CD8-positive, alpha-beta T cell (primary cell): ENCODE measurements at regions of chr10 and their contacts with region 1.

Region 1: GRCh38 chr10:72048450-72049124 is 39.8 kb downstream of the SPOCK2 start:
- DNase-seq: peak; percentile 80 to 95 (median 90)
- ATAC-seq: peak; percentile 98
- H3K4me3 ChIP-seq: no peak overlapping the region
- H3K4me3 Mint-ChIP-seq: no peak overlapping the region
- H3K27ac ChIP-seq: no peak overlapping the region
- H3K27ac Mint-ChIP-seq: no peak overlapping the region
- H3K4me1 ChIP-seq: no peaks in the 10 kb centered on the region
- H3K4me1 Mint-ChIP-seq: peaks cover 7% of the 10 kb centered on the region
- H3K27me3 ChIP-seq: no peaks in the 10 kb centered on the region
- H3K27me3 Mint-ChIP-seq: no peaks in the 10 kb centered on the region
- CTCF ChIP-seq: peak; percentile 99

Region 2: GRCh38 chr10:72038458-72039001 is 10.1 kb before region 1 on chr10:
- CTCF ChIA-PET with region 1: interaction called, 38 read pairs
- POLR2A ChIA-PET with region 1: no interaction called
- intact Hi-C with region 1: no loop called
- DNase-seq: no peak
- ATAC-seq: no peak
- H3K4me3 ChIP-seq: no peak overlapping the region
- H3K4me3 Mint-ChIP-seq: no peak overlapping the region
- H3K27ac ChIP-seq: no peak overlapping the region
- H3K27ac Mint-ChIP-seq: no peak overlapping the region
- H3K4me1 ChIP-seq: no peaks in the 10 kb centered on the region
- H3K4me1 Mint-ChIP-seq: no peaks in the 10 kb centered on the region
- H3K27me3 ChIP-seq: no peaks in the 10 kb centered on the region
- H3K27me3 Mint-ChIP-seq: no peaks in the 10 kb centered on the region
- CTCF ChIP-seq: no peak

Region 3: GRCh38 chr10:72069751-72070526 is 21.4 kb after region 1 on chr10:
- CTCF ChIA-PET with region 1: interaction called, 31 read pairs
- POLR2A ChIA-PET with region 1: interaction called, 3 read pairs
- intact Hi-C with region 1: no loop called
- DNase-seq: peak in 1 of 9 experiments; percentile 36
- ATAC-seq: no peak
- H3K4me3 ChIP-seq: no peak overlapping the region
- H3K4me3 Mint-ChIP-seq: no peak overlapping the region
- H3K27ac ChIP-seq: peak overlapping the region in 1 of 2 experiments; percentile 50
- H3K27ac Mint-ChIP-seq: peak overlapping the region; percentile 72
- H3K4me1 ChIP-seq: peaks cover 52% of the 10 kb centered on the region
- H3K4me1 Mint-ChIP-seq: peaks cover 56% of the 10 kb centered on the region
- H3K27me3 ChIP-seq: no peaks in the 10 kb centered on the region
- H3K27me3 Mint-ChIP-seq: no peaks in the 10 kb centered on the region
- CTCF ChIP-seq: peak; percentile 19

Region 4: GRCh38 chr10:72088889-72089575 is 40.4 kb after region 1 on chr10:
- CTCF ChIA-PET with region 1: interaction called, 14 read pairs
- POLR2A ChIA-PET with region 1: interaction called, 3 read pairs
- intact Hi-C with region 1: loop called in 1 of 2 experiments (anchors 2 kb)
- DNase-seq: peak in 8 of 9 experiments; percentile 37 to 84 (median 71)
- ATAC-seq: peak; percentile 56
- H3K4me3 ChIP-seq: peak overlapping the region; percentile 96 to 98
- H3K4me3 Mint-ChIP-seq: peak overlapping the region; percentile 100
- H3K27ac ChIP-seq: peak overlapping the region; percentile 96 to 98
- H3K27ac Mint-ChIP-seq: peak overlapping the region; percentile 99
- H3K4me1 ChIP-seq: peaks cover 45% of the 10 kb centered on the region
- H3K4me1 Mint-ChIP-seq: peaks cover 49% of the 10 kb centered on the region
- H3K27me3 ChIP-seq: no peaks in the 10 kb centered on the region
- H3K27me3 Mint-ChIP-seq: no peaks in the 10 kb centered on the region
- CTCF ChIP-seq: no peak

Region 5: DNA sequence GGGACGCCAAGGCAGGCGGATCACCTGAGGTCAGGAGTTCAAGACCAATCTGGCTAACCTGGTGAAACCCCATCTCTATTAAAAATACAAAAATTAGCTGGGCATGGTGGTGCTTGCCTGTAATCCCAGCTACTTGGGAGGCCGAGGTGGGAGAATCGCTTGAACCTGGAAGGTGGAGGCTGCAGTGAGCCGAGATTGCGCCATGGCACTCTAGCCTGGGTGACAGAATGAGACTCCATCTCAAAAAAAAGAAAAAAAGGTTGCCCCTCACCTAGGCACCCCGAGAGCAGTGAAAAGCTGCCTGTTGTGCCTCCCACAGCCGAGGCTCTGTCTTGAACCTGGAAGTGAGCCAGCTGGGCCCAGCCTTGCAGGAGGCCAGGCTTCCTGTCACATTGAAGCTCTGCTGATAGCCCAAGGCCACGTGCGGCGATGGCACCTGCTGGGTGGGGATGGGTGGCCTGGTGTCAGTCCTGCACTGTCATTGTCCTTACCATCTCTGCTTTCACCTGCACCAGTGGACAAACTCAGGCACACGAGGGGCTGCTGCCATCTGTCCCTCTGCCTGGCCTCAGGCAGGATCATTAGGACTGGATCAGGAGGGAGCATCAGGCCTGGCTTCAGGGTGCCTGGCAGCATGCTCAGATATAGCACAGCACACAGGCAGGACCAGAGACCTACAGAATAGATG is 268.3 kb after region 1 on chr10:
- CTCF ChIA-PET with region 1: no interaction called
- POLR2A ChIA-PET with region 1: no interaction called
- intact Hi-C with region 1: no loop called
- DNase-seq: peak in 8 of 9 experiments; percentile 53 to 83 (median 65)
- ATAC-seq: no peak
- H3K4me3 ChIP-seq: no peak overlapping the region
- H3K4me3 Mint-ChIP-seq: peak overlapping the region; percentile 35
- H3K27ac ChIP-seq: peak overlapping the region in 1 of 2 experiments; percentile 2
- H3K27ac Mint-ChIP-seq: peak overlapping the region; percentile 90
- H3K4me1 ChIP-seq: peaks cover 78% of the 10 kb centered on the region
- H3K4me1 Mint-ChIP-seq: peaks cover 69% of the 10 kb centered on the region
- H3K27me3 ChIP-seq: no peaks in the 10 kb centered on the region
- H3K27me3 Mint-ChIP-seq: no peaks in the 10 kb centered on the region
- CTCF ChIP-seq: no peak

Region 6: DNA sequence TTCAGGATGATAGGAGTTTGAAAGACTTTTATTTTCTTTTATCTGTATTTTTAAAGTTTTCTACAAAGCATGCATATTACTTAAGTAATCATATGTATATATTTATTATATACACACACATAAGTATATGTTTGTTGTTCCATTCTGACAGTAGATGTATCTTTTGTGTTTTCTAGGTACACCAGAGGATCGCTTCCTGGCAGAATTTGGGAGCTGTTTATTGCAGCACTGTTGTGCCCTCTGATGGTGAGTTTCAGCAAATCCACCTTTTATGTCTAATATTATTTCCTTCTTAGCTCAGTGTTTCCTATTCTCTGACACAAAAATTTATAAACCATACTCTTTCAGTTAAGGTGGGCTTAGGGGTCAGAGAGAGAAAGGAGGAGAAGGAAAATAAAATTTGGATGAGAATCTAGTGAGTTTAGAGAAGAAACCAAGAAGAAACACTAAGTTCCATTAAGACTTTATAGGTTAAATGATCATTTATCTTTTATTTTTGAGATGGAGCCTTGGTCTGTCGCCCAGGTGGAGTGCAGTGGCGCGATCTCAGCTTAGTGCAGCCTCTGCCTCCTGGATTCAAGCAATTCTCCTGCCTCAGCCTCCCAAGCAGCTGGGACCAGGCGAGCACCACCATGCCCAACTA is 785.7 kb after region 1 on chr10:
- CTCF ChIA-PET with region 1: no interaction called
- POLR2A ChIA-PET with region 1: no interaction called
- intact Hi-C with region 1: loop called in 1 of 2 experiments (anchors 5 kb)
- DNase-seq: peak in 7 of 9 experiments; percentile 9 to 75 (median 34)
- ATAC-seq: peak; percentile 71
- H3K4me3 ChIP-seq: no peak overlapping the region
- H3K4me3 Mint-ChIP-seq: no peak overlapping the region
- H3K27ac ChIP-seq: no peak overlapping the region
- H3K27ac Mint-ChIP-seq: no peak overlapping the region
- H3K4me1 ChIP-seq: no peaks in the 10 kb centered on the region
- H3K4me1 Mint-ChIP-seq: peaks cover 2% of the 10 kb centered on the region
- H3K27me3 ChIP-seq: no peaks in the 10 kb centered on the region
- H3K27me3 Mint-ChIP-seq: no peaks in the 10 kb centered on the region
- CTCF ChIP-seq: peak; percentile 64

Region 7: GRCh38 chr10:73625004-73625883 is 1576.7 kb after region 1 on chr10:
- CTCF ChIA-PET with region 1: no interaction called
- POLR2A ChIA-PET with region 1: no interaction called
- intact Hi-C with region 1: no loop called
- DNase-seq: peak in 3 of 9 experiments; percentile 5 to 55 (median 34)
- ATAC-seq: peak; percentile 65
- H3K4me3 ChIP-seq: peak overlapping the region; percentile 78 to 90
- H3K4me3 Mint-ChIP-seq: peak overlapping the region; percentile 95
- H3K27ac ChIP-seq: peak overlapping the region; percentile 80 to 86
- H3K27ac Mint-ChIP-seq: peak overlapping the region; percentile 98
- H3K4me1 ChIP-seq: peaks cover 16% of the 10 kb centered on the region
- H3K4me1 Mint-ChIP-seq: peaks cover 21% of the 10 kb centered on the region
- H3K27me3 ChIP-seq: no peaks in the 10 kb centered on the region
- H3K27me3 Mint-ChIP-seq: no peaks in the 10 kb centered on the region
- CTCF ChIP-seq: no peak